ENCODE measurements at regions of chr7 and their contacts with region 1.

Region 1: DNA sequence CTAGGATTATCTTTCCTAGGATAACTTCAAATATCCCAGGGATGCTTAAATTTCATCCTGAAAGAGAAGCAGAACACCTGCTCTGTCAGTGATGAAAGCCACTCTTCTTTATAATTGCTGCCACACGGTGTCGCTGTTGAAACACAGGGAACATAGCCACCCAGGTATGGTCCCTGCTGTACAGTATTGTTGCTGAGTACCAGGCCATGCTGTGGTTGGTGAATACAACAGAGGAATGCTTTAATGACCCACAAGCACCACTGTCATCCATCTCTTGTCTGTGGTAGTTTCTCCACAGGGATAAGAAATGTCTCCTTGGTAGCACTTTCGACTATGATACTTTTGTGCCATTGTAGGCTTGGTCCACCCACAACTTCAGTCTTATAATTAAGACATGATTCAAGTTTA is 70.6 kb upstream of the STARD3NL start:
- DNase-seq: peak; percentile 44
- ATAC-seq: peak; percentile 97
- H3K4me3 ChIP-seq: no peak overlapping the region
- H3K27ac ChIP-seq: no peak overlapping the region
- H3K4me1 ChIP-seq: no peaks in the 10 kb centered on the region; the same call in 1 of the 2 replicates
- H3K27me3 ChIP-seq: no peaks in the 10 kb centered on the region
- CTCF ChIP-seq: peak; percentile 76 to 93 (median 81)
- EP300 ChIP-seq: no peak
- POLR2A ChIP-seq: no peak
- RAD21 ChIP-seq: peak; percentile 99

Region 2: GRCh38 chr7:38122501-38122900 is 15.0 kb after region 1 on chr7:
- CTCF ChIA-PET with region 1: interaction called, 8 read pairs
- POLR2A ChIA-PET with region 1: no interaction called
- RAD21 ChIA-PET with region 1: no interaction called
- SMC1A ChIA-PET with region 1: interaction called, 12 read pairs
- in situ Hi-C with region 1: no loop called
- intact Hi-C with region 1: no loop called
- DNase-seq: no peak
- ATAC-seq: no peak
- H3K4me3 ChIP-seq: no peak overlapping the region
- H3K27ac ChIP-seq: no peak overlapping the region
- H3K4me1 ChIP-seq: no peaks in the 10 kb centered on the region
- H3K27me3 ChIP-seq: no peaks in the 10 kb centered on the region
- CTCF ChIP-seq: no peak
- EP300 ChIP-seq: no peak
- POLR2A ChIP-seq: no peak
- RAD21 ChIP-seq: no peak

Region 3: GRCh38 chr7:38178004-38178694 is 70.7 kb after region 1 on chr7 and contains the start of gene STARD3NL:
- CTCF ChIA-PET with region 1: interaction called, 25 read pairs
- POLR2A ChIA-PET with region 1: no interaction called
- RAD21 ChIA-PET with region 1: interaction called, 7 read pairs
- SMC1A ChIA-PET with region 1: interaction called, 64 read pairs
- in situ Hi-C with region 1: no loop called
- intact Hi-C with region 1: loop called (anchors 2 kb)
- DNase-seq: peak; percentile 100
- ATAC-seq: peak; percentile 94
- H3K4me3 ChIP-seq: peak within 1 kb of the TSS; percentile 91
- H3K27ac ChIP-seq: peak within 1 kb of the TSS; percentile 90
- H3K4me1 ChIP-seq: no peaks in the 10 kb centered on the region
- H3K27me3 ChIP-seq: no peaks in the 10 kb centered on the region
- CTCF ChIP-seq: no peak
- EP300 ChIP-seq: no peak
- POLR2A ChIP-seq: peak; percentile 78
- RAD21 ChIP-seq: no peak
- polyA plus RNA-seq, gene STARD3NL: 76.4 to 101 TPM

Region 4: DNA sequence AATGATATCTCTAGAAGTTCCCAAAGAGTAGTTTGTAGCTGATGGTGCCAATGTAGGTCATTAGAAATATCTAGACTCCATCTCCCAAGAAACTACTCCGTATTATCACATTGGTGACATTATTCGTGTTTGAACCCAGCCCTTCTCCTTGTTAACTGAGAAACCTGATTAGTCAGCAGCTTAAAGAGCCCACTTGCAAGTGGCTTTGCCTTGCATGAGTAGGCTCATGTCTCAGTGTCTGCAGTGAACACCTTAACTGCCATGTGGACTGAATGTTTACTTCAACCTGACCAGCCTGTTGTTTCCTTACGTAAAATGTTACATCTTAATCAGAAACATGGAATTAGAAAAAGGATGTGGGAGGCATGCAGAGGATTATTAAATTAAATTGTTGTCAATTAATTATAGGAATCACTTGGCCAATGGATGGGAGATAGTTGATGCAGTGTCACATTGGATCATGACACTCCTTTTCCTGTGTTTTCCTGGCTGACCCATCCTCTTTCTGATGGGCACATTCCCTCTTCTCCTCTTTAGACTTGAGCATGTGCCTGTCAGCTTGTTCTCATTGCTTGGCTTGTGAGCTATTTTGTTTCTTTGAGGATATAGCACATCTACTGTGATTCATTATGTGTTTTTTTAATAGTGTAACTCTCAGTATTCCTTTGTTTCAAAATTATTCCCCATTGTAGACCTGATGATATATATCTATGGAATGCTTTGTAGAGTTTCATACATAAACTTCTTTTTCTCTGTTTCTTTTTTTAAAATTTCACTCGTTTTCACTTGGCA is 88.5 kb after region 1 on chr7:
- CTCF ChIA-PET with region 1: interaction called, 29 read pairs
- POLR2A ChIA-PET with region 1: no interaction called
- RAD21 ChIA-PET with region 1: interaction called, 4 read pairs
- SMC1A ChIA-PET with region 1: interaction called, 30 read pairs
- in situ Hi-C with region 1: no loop called
- intact Hi-C with region 1: no loop called
- DNase-seq: no peak
- ATAC-seq: peak; percentile 40; the same call in 1 of the 3 replicates
- H3K4me3 ChIP-seq: no peak overlapping the region
- H3K27ac ChIP-seq: no peak overlapping the region
- H3K4me1 ChIP-seq: no peaks in the 10 kb centered on the region
- H3K27me3 ChIP-seq: no peaks in the 10 kb centered on the region
- CTCF ChIP-seq: no peak
- EP300 ChIP-seq: no peak
- POLR2A ChIP-seq: no peak
- RAD21 ChIP-seq: no peak

Region 5: GRCh38 chr7:38311329-38311937 is 203.9 kb after region 1 on chr7:
- CTCF ChIA-PET with region 1: interaction called, 14 read pairs
- POLR2A ChIA-PET with region 1: no interaction called
- RAD21 ChIA-PET with region 1: interaction called, 3 read pairs
- SMC1A ChIA-PET with region 1: interaction called, 59 read pairs
- in situ Hi-C with region 1: loop called (anchors 5 kb)
- intact Hi-C with region 1: no loop called
- DNase-seq: no peak
- ATAC-seq: peak; percentile 95
- H3K4me3 ChIP-seq: peak overlapping the region; percentile 71
- H3K27ac ChIP-seq: peak overlapping the region; percentile 35; the same call in 1 of the 2 replicates
- H3K4me1 ChIP-seq: peaks cover 20% of the 10 kb centered on the region
- H3K27me3 ChIP-seq: no peaks in the 10 kb centered on the region
- CTCF ChIP-seq: no peak
- EP300 ChIP-seq: no peak
- POLR2A ChIP-seq: peak; percentile 89
- RAD21 ChIP-seq: no peak

Measured in GM12878 (cell line).